CD8-positive, alpha-beta T cell (primary cell): ENCODE measurements at regions of chr1 and their contacts with region 1.

Region 1: GRCh38 chr1:155172732-155173477 is at the start of gene KRTCAP2:
- DNase-seq: peak; percentile 87 to 97 (median 94)
- ATAC-seq: peak; percentile 82
- H3K4me3 ChIP-seq: peak within 1 kb of the TSS; percentile 72 to 98
- H3K4me3 Mint-ChIP-seq: peak within 1 kb of the TSS; percentile 96
- H3K27ac ChIP-seq: peak within 1 kb of the TSS; percentile 73 to 98
- H3K27ac Mint-ChIP-seq: peak within 1 kb of the TSS; percentile 97
- H3K4me1 ChIP-seq: peaks cover 47% of the 10 kb centered on the region
- H3K4me1 Mint-ChIP-seq: peaks cover 43% of the 10 kb centered on the region
- H3K27me3 ChIP-seq: no peaks in the 10 kb centered on the region
- H3K27me3 Mint-ChIP-seq: no peaks in the 10 kb centered on the region
- CTCF ChIP-seq: peak; percentile 90
- total RNA-seq, gene KRTCAP2: 58.9 to 71.2 TPM

Region 2: GRCh38 chr1:155044812-155045690 is 127.9 kb before region 1 on chr1:
- CTCF ChIA-PET with region 1: interaction called, 11 read pairs
- POLR2A ChIA-PET with region 1: interaction called, 5 read pairs
- intact Hi-C with region 1: loop called in 1 of 2 experiments (anchors 5 kb)
- DNase-seq: peak in 8 of 9 experiments; percentile 42 to 80 (median 64)
- ATAC-seq: peak; percentile 94
- H3K4me3 ChIP-seq: no peak overlapping the region
- H3K4me3 Mint-ChIP-seq: no peak overlapping the region
- H3K27ac ChIP-seq: no peak overlapping the region
- H3K27ac Mint-ChIP-seq: no peak overlapping the region
- H3K4me1 ChIP-seq: no peaks in the 10 kb centered on the region
- H3K4me1 Mint-ChIP-seq: peaks cover 4% of the 10 kb centered on the region
- H3K27me3 ChIP-seq: no peaks in the 10 kb centered on the region
- H3K27me3 Mint-ChIP-seq: peaks cover 3% of the 10 kb centered on the region
- CTCF ChIP-seq: peak; percentile 64

Region 3: DNA sequence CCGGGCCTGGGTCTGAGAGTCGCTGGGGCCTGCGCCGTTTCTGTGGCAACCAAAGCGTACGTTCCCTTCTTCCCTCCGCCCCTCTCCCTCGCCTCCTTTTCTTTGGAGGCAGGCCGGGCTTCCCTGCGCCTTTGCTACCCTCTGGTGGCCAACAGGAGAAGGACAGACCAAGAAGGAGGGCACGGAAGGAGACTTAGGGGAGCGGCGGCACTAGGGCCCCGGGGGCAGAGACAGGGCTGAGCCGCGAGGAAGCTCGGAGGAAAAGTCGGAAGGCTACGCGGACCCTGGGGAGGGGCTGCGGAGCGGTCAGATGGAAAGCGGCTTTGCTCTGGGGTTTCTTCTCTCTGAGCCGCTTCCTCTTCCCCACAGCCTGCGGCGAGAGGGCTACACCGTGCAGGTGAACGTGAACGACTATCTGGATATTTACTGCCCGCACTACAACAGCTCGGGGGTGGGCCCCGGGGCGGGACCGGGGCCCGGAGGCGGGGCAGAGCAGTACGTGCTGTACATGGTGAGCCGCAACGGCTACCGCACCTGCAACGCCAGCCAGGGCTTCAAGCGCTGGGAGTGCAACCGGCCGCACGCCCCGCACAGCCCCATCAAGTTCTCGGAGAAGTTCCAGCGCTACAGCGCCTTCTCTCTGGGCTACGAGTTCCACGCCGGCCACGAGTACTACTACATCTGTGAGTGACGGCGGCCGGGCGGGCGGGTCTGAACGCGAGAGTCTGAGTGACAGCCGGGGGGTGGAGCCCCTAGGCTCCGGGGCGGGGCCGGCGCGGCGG is 88.0 kb before region 1 on chr1:
- CTCF ChIA-PET with region 1: interaction called, 270 read pairs
- POLR2A ChIA-PET with region 1: interaction called, 4 read pairs
- intact Hi-C with region 1: loop called in 1 of 2 experiments (anchors 2 kb)
- DNase-seq: peak; percentile 80 to 94 (median 92)
- ATAC-seq: peak; percentile 73
- H3K4me3 ChIP-seq: peak overlapping the region; percentile 82 to 92
- H3K4me3 Mint-ChIP-seq: peak overlapping the region; percentile 95
- H3K27ac ChIP-seq: peak overlapping the region; percentile 57 to 85
- H3K27ac Mint-ChIP-seq: peak overlapping the region; percentile 90
- H3K4me1 ChIP-seq: peaks cover 54% of the 10 kb centered on the region
- H3K4me1 Mint-ChIP-seq: peaks cover 39% of the 10 kb centered on the region
- H3K27me3 ChIP-seq: peaks cover 39 to 44% of the 10 kb centered on the region in 2 experiments
- H3K27me3 Mint-ChIP-seq: peaks cover 30% of the 10 kb centered on the region
- CTCF ChIP-seq: peak; percentile 84

Region 4: DNA sequence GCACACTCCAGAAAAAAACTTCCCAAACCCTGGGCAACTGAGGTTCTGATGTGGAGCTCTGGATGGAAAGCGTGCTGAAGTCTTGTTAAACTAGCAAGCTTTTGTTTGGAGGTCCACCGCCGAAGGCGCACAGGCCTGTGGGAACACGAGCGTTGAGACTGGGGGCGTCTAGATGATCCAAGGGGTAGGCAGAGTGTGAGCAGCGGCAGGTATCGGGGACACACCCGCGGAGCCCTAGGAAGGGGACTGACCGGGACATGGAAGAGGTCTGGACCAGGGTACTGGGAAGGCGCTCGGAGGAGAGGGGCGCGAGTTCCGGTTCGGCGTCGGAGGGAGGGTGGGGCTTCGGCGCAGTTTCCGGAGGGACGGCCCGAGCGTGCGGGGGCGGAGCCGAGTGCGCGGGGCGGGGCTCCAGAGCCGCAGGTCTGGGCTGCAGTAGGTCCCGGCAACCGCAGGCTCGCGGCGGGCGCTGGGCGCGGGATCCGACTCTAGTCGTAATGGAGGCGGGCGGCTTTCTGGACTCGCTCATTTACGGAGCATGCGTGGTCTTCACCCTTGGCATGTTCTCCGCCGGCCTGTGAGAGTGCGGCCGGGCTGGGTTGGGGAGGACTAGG is 37.4 kb before region 1 on chr1 and contains the start of gene SLC50A1:
- CTCF ChIA-PET with region 1: interaction called, 19 read pairs
- POLR2A ChIA-PET with region 1: no interaction called
- intact Hi-C with region 1: loop called (anchors 1 kb)
- DNase-seq: peak; percentile 82 to 96 (median 92)
- ATAC-seq: peak; percentile 84
- H3K4me3 ChIP-seq: peak within 1 kb of the TSS; percentile 93 to 95
- H3K4me3 Mint-ChIP-seq: peak within 1 kb of the TSS; percentile 98
- H3K27ac ChIP-seq: peak within 1 kb of the TSS; percentile 78 to 99
- H3K27ac Mint-ChIP-seq: peak within 1 kb of the TSS; percentile 99
- H3K4me1 ChIP-seq: peaks cover 29% of the 10 kb centered on the region
- H3K4me1 Mint-ChIP-seq: peaks cover 49% of the 10 kb centered on the region
- H3K27me3 ChIP-seq: no peaks in the 10 kb centered on the region
- H3K27me3 Mint-ChIP-seq: no peaks in the 10 kb centered on the region
- CTCF ChIP-seq: no peak
- total RNA-seq, gene SLC50A1: 12.9 to 14.2 TPM

Region 5: GRCh38 chr1:155202731-155203505 is 30.0 kb after region 1 on chr1:
- CTCF ChIA-PET with region 1: interaction called, 147 read pairs
- POLR2A ChIA-PET with region 1: no interaction called
- intact Hi-C with region 1: loop called (anchors 1 kb)
- DNase-seq: no peak
- ATAC-seq: no peak
- H3K4me3 ChIP-seq: no peak overlapping the region
- H3K4me3 Mint-ChIP-seq: no peak overlapping the region
- H3K27ac ChIP-seq: no peak overlapping the region
- H3K27ac Mint-ChIP-seq: no peak overlapping the region
- H3K4me1 ChIP-seq: peaks cover 11% of the 10 kb centered on the region
- H3K4me1 Mint-ChIP-seq: peaks cover 10% of the 10 kb centered on the region
- H3K27me3 ChIP-seq: no peaks in the 10 kb centered on the region
- H3K27me3 Mint-ChIP-seq: no peaks in the 10 kb centered on the region
- CTCF ChIP-seq: no peak

Region 6: GRCh38 chr1:155244368-155245162 is 71.7 kb after region 1 on chr1:
- CTCF ChIA-PET with region 1: interaction called, 5 read pairs
- POLR2A ChIA-PET with region 1: no interaction called
- intact Hi-C with region 1: loop called in 1 of 2 experiments (anchors 1 kb)
- DNase-seq: peak; percentile 89 to 99 (median 96)
- ATAC-seq: peak; percentile 95
- H3K4me3 ChIP-seq: peak overlapping the region; percentile 59 to 73
- H3K4me3 Mint-ChIP-seq: peak overlapping the region; percentile 88
- H3K27ac ChIP-seq: peak overlapping the region; percentile 71 to 78
- H3K27ac Mint-ChIP-seq: peak overlapping the region; percentile 97
- H3K4me1 ChIP-seq: peaks cover 34% of the 10 kb centered on the region
- H3K4me1 Mint-ChIP-seq: peaks cover 43% of the 10 kb centered on the region
- H3K27me3 ChIP-seq: no peaks in the 10 kb centered on the region
- H3K27me3 Mint-ChIP-seq: peaks cover 2% of the 10 kb centered on the region
- CTCF ChIP-seq: peak; percentile 62

Region 7: DNA sequence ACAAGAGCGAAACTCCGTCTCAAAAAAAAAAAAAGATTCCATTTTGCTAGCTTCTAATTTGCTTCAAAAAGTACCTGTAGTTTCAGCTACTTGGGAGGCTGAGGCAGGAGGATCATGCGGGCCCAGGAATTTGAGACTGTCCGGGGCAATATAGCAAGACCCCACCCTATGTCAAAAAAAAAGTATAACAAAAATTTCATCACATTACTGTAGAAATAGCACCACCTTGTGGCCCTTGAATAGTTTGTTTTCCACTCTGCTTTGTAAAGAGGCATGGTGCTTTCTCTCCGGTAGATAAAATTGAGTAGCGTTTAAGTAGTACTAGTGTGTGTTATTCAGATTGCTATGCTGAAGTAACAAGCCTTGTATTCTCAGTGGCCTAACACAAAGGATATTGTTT is 418.9 kb after region 1 on chr1:
- CTCF ChIA-PET with region 1: interaction called, 4 read pairs
- POLR2A ChIA-PET with region 1: no interaction called
- intact Hi-C with region 1: loop called (anchors 1 to 2 kb)
- DNase-seq: peak in 5 of 9 experiments; percentile 11 to 78 (median 31)
- ATAC-seq: peak; percentile 77
- H3K4me3 ChIP-seq: no peak overlapping the region
- H3K4me3 Mint-ChIP-seq: no peak overlapping the region
- H3K27ac ChIP-seq: no peak overlapping the region
- H3K27ac Mint-ChIP-seq: no peak overlapping the region
- H3K4me1 ChIP-seq: no peaks in the 10 kb centered on the region
- H3K4me1 Mint-ChIP-seq: peaks cover 3% of the 10 kb centered on the region
- H3K27me3 ChIP-seq: no peaks in the 10 kb centered on the region
- H3K27me3 Mint-ChIP-seq: no peaks in the 10 kb centered on the region
- CTCF ChIP-seq: peak; percentile 64